Activated CD4-positive, alpha-beta T cell treated with anti-CD3 and anti-CD28 coated beads, Interleukin-2, amount 10 ng/mL, durations not matched to agents 7 days and 5 days (primary cell): ENCODE measurements at regions of chr20 and their contacts with region 1.

Region 1: DNA sequence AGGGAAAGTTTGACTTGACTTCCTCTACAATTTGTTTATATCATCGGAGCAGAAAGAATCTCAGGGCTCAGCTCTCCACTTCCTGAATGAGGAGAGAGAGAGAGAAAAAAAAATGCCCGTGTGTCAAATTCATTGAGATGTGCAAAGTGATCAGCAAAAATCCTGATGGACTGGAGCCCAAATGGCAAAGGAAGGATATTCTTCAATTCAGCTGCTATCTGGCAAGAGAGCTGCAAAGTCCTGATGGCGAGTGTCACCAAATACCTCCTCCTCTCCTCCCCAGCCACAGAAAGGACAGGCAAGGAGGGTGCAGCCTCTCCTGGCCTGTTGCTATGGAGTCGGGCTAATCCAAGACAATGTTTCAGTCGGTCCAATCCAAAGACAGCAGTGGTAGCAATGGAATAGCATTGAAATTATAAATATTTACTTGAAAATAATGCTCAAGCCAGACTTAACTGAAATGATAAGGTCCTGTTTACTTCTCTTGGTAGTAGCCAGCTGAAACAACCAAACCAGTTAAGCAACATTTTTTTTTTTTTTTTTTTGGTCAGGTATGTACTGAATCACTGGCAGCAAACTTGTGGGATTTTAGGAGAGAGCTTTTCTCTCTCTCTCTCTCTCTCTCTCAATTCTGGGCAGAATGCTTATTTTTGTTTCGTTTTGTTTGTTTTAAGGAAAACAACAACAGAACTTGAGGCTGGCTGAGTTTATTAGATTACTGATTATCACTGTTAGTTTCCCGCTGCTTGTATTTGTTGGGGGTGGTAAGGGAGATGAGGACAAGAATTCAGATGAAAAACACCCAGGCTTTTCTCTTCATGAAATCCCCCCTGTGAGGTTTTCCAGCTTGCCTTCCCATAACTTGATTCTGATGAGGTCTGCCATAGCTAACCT is 204.2 kb downstream of the BCAS1 start:
- DNase-seq: no peak
- H3K4me3 Mint-ChIP-seq: peak overlapping the region; percentile 45
- H3K27ac Mint-ChIP-seq: peak overlapping the region; percentile 88
- H3K4me1 Mint-ChIP-seq: peaks cover 66% of the 10 kb centered on the region
- H3K27me3 Mint-ChIP-seq: no peaks in the 10 kb centered on the region

Region 2: GRCh38 chr20:53834062-53834442 is 32.1 kb before region 1 on chr20:
- CTCF ChIA-PET with region 1: no interaction called
- POLR2A ChIA-PET with region 1: no interaction called
- DNase-seq: no peak
- H3K4me3 Mint-ChIP-seq: no peak overlapping the region
- H3K27ac Mint-ChIP-seq: no peak overlapping the region
- H3K4me1 Mint-ChIP-seq: peaks cover 64% of the 10 kb centered on the region
- H3K27me3 Mint-ChIP-seq: no peaks in the 10 kb centered on the region

Region 3: GRCh38 chr20:53884859-53885541 is 18.9 kb after region 1 on chr20:
- CTCF ChIA-PET with region 1: interaction called, 10 read pairs
- POLR2A ChIA-PET with region 1: no interaction called
- DNase-seq: no peak
- H3K4me3 Mint-ChIP-seq: no peak overlapping the region
- H3K27ac Mint-ChIP-seq: peak overlapping the region; percentile 78
- H3K4me1 Mint-ChIP-seq: peaks cover 54% of the 10 kb centered on the region
- H3K27me3 Mint-ChIP-seq: no peaks in the 10 kb centered on the region